ENCODE measurements at regions of chr9 and their contacts with region 1.

Region 1: DNA sequence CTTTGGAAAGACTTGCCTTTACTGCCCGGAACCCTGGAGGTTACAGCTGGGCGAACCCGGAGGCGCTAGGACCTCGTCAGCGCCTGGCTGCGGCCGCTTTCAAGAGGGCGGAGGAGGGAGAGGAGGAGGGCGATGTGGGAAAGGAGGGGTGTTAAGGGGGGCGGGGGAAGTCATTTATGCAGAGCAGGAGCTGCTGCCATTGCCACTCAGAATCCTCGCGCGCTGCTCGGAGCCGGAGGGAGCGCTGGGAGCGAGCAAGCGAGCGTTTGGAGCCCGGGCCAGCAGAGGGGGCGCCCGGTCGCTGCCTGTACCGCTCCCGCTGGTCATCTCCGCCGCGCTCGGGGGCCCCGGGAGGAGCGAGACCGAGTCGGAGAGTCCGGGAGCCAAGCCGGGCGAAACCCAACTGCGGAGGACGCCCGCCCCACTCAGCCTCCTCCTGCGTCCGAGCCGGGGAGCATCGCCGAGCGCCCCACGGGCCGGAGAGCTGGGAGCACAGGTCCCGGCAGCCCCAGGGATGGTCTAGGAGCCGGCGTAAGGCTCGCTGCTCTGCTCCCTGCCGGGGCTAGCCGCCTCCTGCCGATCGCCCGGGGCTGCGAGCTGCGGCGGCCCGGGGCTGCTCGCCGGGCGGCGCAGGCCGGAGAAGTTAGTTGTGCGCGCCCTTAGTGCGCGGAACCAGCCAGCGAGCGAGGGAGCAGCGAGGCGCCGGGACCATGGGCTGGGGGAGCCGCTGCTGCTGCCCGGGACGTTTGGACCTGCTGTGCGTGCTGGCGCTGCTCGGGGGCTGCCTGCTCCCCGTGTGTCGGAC is at the start of gene PCSK5:
- DNase-seq: peak; percentile 76 to 96
- H3K4me3 ChIP-seq: peak within 1 kb of the TSS; percentile 72 to 78
- H3K27ac ChIP-seq: peak within 1 kb of the TSS; percentile 95 to 97
- H3K4me1 ChIP-seq: peaks cover 0 to 5% of the 10 kb centered on the region in 2 donors
- H3K27me3 ChIP-seq: no peaks in the 10 kb centered on the region
- CTCF ChIP-seq: peak in 2 of 3 experiments; percentile 27 to 38
- total RNA-seq, gene PCSK5: 66.3 TPM

Region 2: DNA sequence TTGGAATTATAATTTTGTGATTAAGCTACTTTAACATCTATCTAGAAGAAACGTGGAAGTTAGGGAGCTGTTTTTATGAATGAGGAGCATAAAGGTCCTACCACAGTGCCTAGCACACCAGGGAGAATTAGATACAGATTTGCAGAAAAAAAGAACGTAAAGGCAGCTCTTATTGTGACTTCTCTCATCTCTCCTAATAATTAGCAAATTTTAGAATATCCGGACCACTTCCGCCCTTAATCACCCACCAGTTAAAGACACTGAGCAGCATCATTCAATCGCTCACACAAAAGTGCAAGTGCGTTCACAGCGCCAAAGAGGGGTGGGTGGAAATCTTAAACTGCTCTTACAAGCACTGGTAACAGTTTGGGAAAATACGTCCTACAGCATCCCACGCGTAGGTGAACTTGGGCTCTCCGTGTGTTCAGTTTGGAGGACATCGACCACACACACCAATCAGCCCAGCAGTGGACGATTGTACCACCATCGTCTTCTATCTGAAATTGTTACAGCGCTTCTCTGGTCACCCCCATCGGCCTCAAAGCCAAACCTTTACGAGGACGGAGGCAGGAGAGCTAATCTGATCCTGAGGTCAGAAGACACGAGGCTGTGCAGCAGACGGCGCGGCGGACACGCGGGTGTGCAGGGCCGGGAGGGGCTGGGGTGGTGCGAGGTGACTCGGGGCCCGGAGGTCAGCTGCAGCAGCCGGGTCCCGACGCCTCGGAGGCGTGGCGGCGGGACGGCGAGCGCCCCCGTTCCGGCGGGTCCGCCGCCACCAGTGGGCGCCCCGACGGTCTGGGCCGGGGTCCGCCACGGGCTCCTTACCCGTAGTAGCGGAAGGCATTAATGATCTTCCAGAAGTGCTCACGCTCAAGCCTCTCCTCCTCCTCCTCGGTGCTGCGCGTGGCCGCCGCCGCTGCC is 863.2 kb before region 1 on chr9:
- intact Hi-C with region 1: loop called (anchors 10 kb)
- DNase-seq: peak in 1 of 2 donors; percentile 80
- H3K4me3 ChIP-seq: peak overlapping the region; percentile 78 to 98
- H3K27ac ChIP-seq: peak overlapping the region; percentile 84 to 88
- H3K4me1 ChIP-seq: peaks cover 2 to 11% of the 10 kb centered on the region in 2 donors
- H3K27me3 ChIP-seq: no peaks in the 10 kb centered on the region
- CTCF ChIP-seq: no peak

Region 3: DNA sequence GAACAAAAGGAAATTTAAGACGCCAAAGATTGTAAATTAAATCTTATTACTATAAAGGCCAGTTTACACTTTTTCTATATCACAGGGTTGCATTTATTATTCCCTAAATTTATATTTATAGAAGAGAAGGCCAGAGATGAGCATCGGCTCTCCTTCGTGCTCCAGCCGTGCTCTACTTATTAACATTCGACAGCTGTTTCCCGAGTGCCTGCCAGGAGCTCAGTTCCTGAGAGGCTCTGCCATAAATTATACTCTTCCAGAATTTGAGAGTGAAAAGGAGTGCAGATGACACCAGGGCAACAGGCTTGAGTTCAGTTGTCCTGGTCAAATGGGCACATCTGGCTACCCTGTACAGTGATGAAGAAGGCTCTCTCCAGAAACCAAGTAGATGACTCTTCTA is 69.9 kb after region 1 on chr9:
- intact Hi-C with region 1: loop called (anchors 2 kb)
- DNase-seq: no peak
- H3K4me3 ChIP-seq: no peak overlapping the region
- H3K27ac ChIP-seq: no peak overlapping the region
- H3K4me1 ChIP-seq: peaks cover 11 to 35% of the 10 kb centered on the region in 2 donors
- H3K27me3 ChIP-seq: no peaks in the 10 kb centered on the region
- CTCF ChIP-seq: no peak

Region 4: DNA sequence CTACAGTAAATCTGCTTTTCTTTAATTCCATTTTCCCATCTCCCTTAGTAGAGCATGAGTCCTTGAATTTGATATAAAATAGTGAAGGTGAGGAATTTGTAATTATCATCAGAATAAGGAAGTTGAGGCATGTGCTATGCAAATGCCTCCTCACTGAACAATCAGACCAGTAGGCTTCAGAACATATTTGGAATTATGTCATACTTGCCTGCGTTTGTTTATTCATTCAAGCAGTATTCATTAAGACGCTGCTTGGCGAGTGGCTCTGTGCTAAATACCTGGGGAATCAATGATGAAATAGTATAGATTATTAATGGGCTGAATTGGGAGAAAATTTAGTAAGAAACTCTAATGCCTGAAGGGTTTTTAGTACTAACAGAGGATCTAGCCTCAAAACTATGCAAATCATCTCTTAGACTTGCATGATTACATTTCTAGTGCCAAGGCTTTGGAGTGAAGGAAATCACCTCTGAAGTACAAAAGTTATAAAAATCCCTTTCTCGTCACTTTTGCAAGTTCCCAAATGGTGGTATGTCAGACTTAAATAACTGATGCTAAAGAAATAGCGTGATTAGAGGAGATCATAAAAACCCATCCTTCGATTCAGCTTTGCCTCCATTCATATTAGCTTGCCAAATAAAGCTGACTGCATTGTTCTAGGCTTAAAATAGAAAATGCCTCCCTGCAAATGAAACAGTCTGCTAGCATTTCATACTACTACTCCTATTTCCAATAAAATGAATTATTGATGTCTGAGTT is 141.5 kb after region 1 on chr9:
- intact Hi-C with region 1: loop called (anchors 10 kb)
- DNase-seq: no peak
- H3K4me3 ChIP-seq: peak overlapping the region in 1 of 2 donors; percentile 18
- H3K27ac ChIP-seq: peak overlapping the region; percentile 49 to 53
- H3K4me1 ChIP-seq: peaks cover 0 to 3% of the 10 kb centered on the region in 2 donors
- H3K27me3 ChIP-seq: no peaks in the 10 kb centered on the region
- CTCF ChIP-seq: no peak

Region 5: GRCh38 chr9:76255781-76256455 is 365.2 kb after region 1 on chr9:
- intact Hi-C with region 1: loop called (anchors 5 kb)
- DNase-seq: peak; percentile 37 to 91
- H3K4me3 ChIP-seq: peak overlapping the region; percentile 11 to 51
- H3K27ac ChIP-seq: peak overlapping the region; percentile 79 to 89
- H3K4me1 ChIP-seq: peaks cover 6 to 12% of the 10 kb centered on the region in 2 donors
- H3K27me3 ChIP-seq: no peaks in the 10 kb centered on the region
- CTCF ChIP-seq: no peak

Region 6: DNA sequence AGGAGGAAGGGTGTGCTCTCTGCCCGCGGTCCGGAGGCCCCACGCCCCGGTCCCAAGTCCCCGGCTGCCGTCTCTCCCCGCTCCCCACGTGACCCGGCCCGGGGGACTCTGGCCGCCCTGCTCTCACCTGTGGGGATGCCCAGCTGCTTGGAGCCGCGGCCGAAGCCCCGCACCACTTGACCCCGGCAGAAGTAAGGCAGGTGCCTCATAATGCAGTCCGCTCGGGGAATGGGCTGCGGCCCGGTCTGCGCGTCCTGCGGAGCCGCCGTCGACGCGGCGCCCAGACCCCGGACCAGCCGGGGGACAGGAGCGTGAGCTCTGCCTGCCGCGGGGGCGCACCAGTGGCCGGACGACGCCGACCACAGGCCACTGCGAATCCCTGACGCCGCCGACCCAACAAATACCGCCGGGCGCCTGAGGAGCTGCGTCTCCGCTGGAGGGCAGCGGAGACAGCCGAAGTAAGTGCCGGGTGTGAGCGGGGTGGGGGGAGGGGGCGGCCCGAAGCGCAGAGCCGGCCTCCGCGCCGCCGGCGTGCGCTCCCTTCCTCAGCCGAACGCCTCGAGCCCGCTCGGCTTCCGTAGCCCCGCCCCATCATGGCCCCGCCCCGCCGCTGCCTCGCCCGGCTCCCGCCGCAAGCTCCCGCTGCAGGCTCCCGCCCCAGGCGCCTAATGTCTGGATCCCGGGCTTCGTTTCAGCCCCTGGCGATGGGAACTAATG is 503.4 kb after region 1 on chr9 and contains the start of gene RFK:
- intact Hi-C with region 1: loop called (anchors 5 kb)
- DNase-seq: peak; percentile 49 to 96
- H3K4me3 ChIP-seq: peak within 1 kb of the TSS; percentile 95 to 97
- H3K27ac ChIP-seq: peak within 1 kb of the TSS; percentile 94 to 97
- H3K4me1 ChIP-seq: peaks cover 0 to 11% of the 10 kb centered on the region in 2 donors
- H3K27me3 ChIP-seq: no peaks in the 10 kb centered on the region
- CTCF ChIP-seq: peak; percentile 48 to 53 (median 52)
- total RNA-seq, gene RFK: 8.9 TPM

Region 7: GRCh38 chr9:77177161-77177893 is 1286.7 kb after region 1 on chr9 and contains the start of gene VPS13A:
- intact Hi-C with region 1: loop called (anchors 10 kb)
- DNase-seq: peak; percentile 78 to 97
- H3K4me3 ChIP-seq: peak within 1 kb of the TSS; percentile 64 to 90
- H3K27ac ChIP-seq: peak within 1 kb of the TSS; percentile 78 to 90
- H3K4me1 ChIP-seq: peaks cover 0 to 15% of the 10 kb centered on the region in 2 donors
- H3K27me3 ChIP-seq: no peaks in the 10 kb centered on the region
- CTCF ChIP-seq: peak in 1 of 3 experiments; percentile 46
- total RNA-seq, gene VPS13A: 18.8 TPM

Measured in ascending aorta (tissue), 2 donors.